K562 (cell line): ENCODE measurements at regions of chr18 and their contacts with region 1.

Region 1: DNA sequence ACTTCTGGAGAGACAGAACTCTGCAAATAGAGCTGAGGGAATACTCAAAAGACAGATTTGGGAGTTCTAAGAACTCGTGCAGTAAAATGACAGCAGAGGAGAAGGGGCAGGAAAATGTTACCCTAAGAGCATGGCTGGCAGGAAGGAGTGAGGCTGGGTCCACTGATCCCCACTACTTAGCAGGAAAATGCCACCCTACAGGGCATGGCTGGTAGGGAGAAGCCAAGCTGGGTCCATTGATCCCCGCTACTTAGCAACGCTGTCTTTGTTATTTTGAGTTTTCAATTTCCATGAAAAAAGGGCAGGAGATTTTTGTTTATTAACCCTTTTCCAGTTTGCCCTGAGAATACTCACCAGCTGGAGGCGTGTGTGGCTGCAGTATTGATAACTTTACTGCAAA is 100.3 kb upstream of the TMEM200C start:
- DNase-seq: no peak
- ATAC-seq: no peak
- H3K4me3 ChIP-seq: no peak overlapping the region
- H3K27ac ChIP-seq: no peak overlapping the region
- H3K4me1 ChIP-seq: no peaks in the 10 kb centered on the region
- H3K27me3 ChIP-seq: no peaks in the 10 kb centered on the region
- CTCF ChIP-seq: no peak
- EP300 ChIP-seq: no peak
- POLR2A ChIP-seq: no peak
- RAD21 ChIP-seq: no peak

Region 2: GRCh38 chr18:5975111-5976002 is 20.3 kb before region 1 on chr18:
- CTCF ChIA-PET with region 1: no interaction called
- POLR2A ChIA-PET with region 1: no interaction called
- in situ Hi-C with region 1: no loop called
- intact Hi-C with region 1: loop called (anchors 2 kb)
- DNase-seq: no peak
- ATAC-seq: no peak
- H3K4me3 ChIP-seq: no peak overlapping the region
- H3K27ac ChIP-seq: no peak overlapping the region
- H3K4me1 ChIP-seq: no peaks in the 10 kb centered on the region
- H3K27me3 ChIP-seq: no peaks in the 10 kb centered on the region
- CTCF ChIP-seq: no peak
- EP300 ChIP-seq: no peak
- POLR2A ChIP-seq: no peak
- RAD21 ChIP-seq: no peak